PC-3 (cell line): ENCODE measurements at regions of chr11 and their contacts with region 1.

Region 1: GRCh38 chr11:128522055-128522942 is 65.1 kb downstream of the ETS1 start:
- DNase-seq: peak; percentile 99
- ATAC-seq: peak; percentile 80
- H3K4me3 ChIP-seq: peak overlapping the region; percentile 77
- H3K27ac ChIP-seq: peak overlapping the region; percentile 90
- H3K4me1 ChIP-seq: peaks cover 68% of the 10 kb centered on the region
- H3K27me3 ChIP-seq: no peaks in the 10 kb centered on the region
- CTCF ChIP-seq: no peak

Region 2: DNA sequence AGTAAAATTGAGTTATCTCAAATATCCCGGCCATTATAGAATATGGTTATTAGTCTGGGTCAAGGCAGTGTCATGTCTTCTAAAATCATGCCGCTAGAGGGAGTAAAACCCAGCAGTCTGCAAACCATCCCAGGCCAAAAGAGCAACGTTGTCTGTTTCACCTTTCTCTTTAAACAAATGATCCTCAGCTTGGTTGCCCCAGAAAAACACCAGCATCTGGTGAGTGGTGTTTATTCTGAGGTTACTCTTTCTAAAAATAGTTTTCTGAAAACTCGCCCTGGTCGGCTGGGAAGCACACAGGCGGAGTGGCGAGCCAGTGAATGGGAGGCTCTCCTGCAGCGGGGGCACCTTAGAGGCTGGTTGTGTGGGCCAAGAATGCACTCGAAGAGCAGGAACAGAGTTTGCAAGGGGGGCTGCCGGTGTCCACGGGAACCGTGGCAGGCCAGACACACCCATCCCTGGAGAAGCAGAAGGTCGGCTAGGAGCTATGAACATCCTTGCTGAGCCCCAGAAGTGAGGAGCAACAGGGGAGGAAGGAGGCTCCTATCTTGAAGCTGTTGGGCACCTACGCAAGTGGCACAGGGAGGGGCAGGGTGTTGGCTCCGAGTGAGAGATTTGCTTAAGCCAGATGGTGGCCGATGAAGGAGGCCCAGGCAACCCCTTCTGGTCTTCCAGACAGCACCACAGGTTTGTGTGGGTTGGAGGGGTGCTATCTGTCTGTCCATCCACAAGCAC is 232.0 kb before region 1 on chr11:
- CTCF ChIA-PET with region 1: no interaction called
- POLR2A ChIA-PET with region 1: interaction called, 3 read pairs
- intact Hi-C with region 1: loop called (anchors 2 kb)
- DNase-seq: peak; percentile 94
- ATAC-seq: peak; percentile 82
- H3K4me3 ChIP-seq: no peak overlapping the region
- H3K27ac ChIP-seq: peak overlapping the region; percentile 53
- H3K4me1 ChIP-seq: peaks cover 39% of the 10 kb centered on the region
- H3K27me3 ChIP-seq: no peaks in the 10 kb centered on the region
- CTCF ChIP-seq: peak; percentile 97

Region 3: GRCh38 chr11:128448200-128448886 is 74.0 kb before region 1 on chr11:
- CTCF ChIA-PET with region 1: interaction called, 5 read pairs
- POLR2A ChIA-PET with region 1: no interaction called
- intact Hi-C with region 1: loop called (anchors 5 kb)
- DNase-seq: peak; percentile 100
- ATAC-seq: peak; percentile 97
- H3K4me3 ChIP-seq: peak overlapping the region; percentile 43; the same call in 1 of the 2 replicates
- H3K27ac ChIP-seq: peak overlapping the region; percentile 91
- H3K4me1 ChIP-seq: peaks cover 31% of the 10 kb centered on the region
- H3K27me3 ChIP-seq: no peaks in the 10 kb centered on the region
- CTCF ChIP-seq: peak; percentile 65

Region 4: DNA sequence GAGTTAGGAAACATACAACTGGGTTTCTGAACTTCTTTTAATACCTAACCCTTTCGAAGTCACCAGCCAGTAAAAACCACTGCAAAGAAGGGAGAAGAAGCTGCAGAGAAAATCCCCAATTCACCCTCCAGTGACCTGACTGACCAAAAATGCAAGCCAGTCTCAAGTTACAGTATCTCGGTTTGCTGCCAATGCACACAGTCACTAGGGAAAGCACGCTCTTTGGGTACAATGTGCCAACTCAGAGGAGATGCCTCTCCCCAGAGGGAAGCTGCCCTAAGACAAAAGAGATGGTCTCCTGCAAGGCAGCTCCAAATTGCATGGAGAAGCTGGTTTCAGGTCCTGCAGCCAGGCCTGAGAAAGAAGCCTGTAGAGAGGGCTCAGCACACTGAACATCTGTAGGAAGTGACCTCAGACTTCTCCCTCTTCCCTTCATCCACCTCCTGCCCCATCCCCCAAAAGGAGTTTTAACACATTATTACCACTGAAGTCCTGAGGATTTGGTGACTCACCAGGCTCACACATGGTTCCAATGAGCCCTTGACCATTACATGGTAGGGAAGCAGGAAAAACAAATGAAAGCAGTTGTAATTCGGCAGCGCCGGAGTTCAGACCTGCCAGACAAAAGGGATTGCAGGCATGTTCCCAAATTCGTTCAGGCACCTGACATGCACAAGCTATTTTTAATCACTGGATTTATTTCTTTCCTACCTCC is 25.1 kb before region 1 on chr11:
- CTCF ChIA-PET with region 1: no interaction called
- POLR2A ChIA-PET with region 1: interaction called, 10 read pairs
- intact Hi-C with region 1: loop called (anchors 1 kb)
- DNase-seq: peak; percentile 97
- ATAC-seq: peak; percentile 74
- H3K4me3 ChIP-seq: peak overlapping the region; percentile 62
- H3K27ac ChIP-seq: peak overlapping the region; percentile 91
- H3K4me1 ChIP-seq: peaks cover 97% of the 10 kb centered on the region
- H3K27me3 ChIP-seq: no peaks in the 10 kb centered on the region
- CTCF ChIP-seq: no peak

Region 5: GRCh38 chr11:128552783-128553661 is 30.7 kb after region 1 on chr11:
- CTCF ChIA-PET with region 1: interaction called, 18 read pairs
- POLR2A ChIA-PET with region 1: interaction called, 6 read pairs
- intact Hi-C with region 1: no loop called
- DNase-seq: no peak
- ATAC-seq: no peak
- H3K4me3 ChIP-seq: no peak overlapping the region
- H3K27ac ChIP-seq: no peak overlapping the region
- H3K4me1 ChIP-seq: no peaks in the 10 kb centered on the region
- H3K27me3 ChIP-seq: no peaks in the 10 kb centered on the region
- CTCF ChIP-seq: no peak

Region 6: GRCh38 chr11:128745311-128746136 is 223.2 kb after region 1 on chr11:
- CTCF ChIA-PET with region 1: no interaction called
- POLR2A ChIA-PET with region 1: interaction called, 10 read pairs
- intact Hi-C with region 1: no loop called
- DNase-seq: no peak
- ATAC-seq: no peak
- H3K4me3 ChIP-seq: no peak overlapping the region
- H3K27ac ChIP-seq: no peak overlapping the region
- H3K4me1 ChIP-seq: no peaks in the 10 kb centered on the region
- H3K27me3 ChIP-seq: no peaks in the 10 kb centered on the region
- CTCF ChIP-seq: no peak